ENCODE measurements at regions of chr2 and their contacts with region 1.

Region 1: GRCh38 chr2:174985630-174986029 is 19.6 kb downstream of the CHN1 start:
- DNase-seq: no peak
- H3K4me3 ChIP-seq: no peak overlapping the region
- H3K27me3 ChIP-seq: no peaks in the 10 kb centered on the region
- CTCF ChIP-seq: peak; percentile 57

Region 2: DNA sequence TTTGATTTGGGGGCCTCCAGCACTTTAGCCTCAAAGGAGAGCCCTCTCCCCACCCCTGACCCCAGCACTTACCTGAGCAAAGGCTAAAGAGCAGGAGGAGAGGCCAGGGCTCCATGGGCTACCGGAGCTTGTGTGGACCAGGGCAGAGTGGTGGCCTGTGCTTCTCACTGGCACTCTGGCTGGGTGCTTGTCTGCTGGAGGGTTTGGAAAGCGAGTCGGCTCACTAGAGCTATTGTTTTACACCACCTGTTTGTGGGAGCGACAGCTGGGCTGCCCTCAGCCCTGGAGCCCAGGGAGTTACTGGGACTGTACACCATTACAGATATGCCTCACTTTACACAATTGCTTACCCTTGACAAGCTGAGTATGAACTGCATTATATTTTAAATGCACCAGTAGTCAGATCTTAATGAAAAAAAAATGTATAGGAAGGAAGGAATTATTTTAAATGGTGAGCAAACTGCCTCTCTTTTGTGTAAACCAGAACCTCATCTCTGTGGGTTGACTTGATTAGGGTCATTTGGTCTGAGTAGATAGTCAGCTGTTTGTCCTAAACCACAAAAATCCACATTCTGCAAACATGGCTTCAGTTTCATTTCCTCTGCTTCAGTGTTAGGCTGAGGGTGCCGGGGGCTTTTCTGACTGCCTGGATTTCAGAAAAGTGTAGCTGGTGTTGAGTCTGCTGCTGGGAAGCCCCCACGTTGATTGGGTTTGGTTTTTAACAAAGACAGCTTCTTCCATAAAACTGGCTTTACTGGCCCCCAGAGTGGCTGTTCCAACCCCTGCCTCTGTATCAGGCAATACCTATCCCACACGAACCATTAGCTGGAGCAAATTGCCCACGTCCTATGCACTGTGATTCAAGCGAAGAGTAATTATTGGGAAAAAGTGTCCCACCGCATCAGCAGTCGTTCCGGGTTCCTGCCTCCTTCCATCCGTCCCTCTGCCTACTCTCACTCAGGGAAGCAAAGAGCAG is 221.1 kb before region 1 on chr2 and contains the start of gene CHRNA1:
- CTCF ChIA-PET with region 1: interaction called, 142 read pairs
- POLR2A ChIA-PET with region 1: no interaction called
- DNase-seq: no peak
- H3K4me3 ChIP-seq: no peak within 1 kb of the TSS
- H3K27me3 ChIP-seq: no peaks in the 10 kb centered on the region
- CTCF ChIP-seq: no peak
- polyA plus RNA-seq, gene CHRNA1: 0.20 TPM in 1 of 2 replicates, not detected in the other

Region 3: GRCh38 chr2:174778085-174778981 is 207.3 kb before region 1 on chr2:
- CTCF ChIA-PET with region 1: interaction called, 142 read pairs
- POLR2A ChIA-PET with region 1: interaction called, 4 read pairs
- DNase-seq: peak; percentile 99
- H3K4me3 ChIP-seq: no peak overlapping the region
- H3K27me3 ChIP-seq: no peaks in the 10 kb centered on the region
- CTCF ChIP-seq: no peak

Region 4: DNA sequence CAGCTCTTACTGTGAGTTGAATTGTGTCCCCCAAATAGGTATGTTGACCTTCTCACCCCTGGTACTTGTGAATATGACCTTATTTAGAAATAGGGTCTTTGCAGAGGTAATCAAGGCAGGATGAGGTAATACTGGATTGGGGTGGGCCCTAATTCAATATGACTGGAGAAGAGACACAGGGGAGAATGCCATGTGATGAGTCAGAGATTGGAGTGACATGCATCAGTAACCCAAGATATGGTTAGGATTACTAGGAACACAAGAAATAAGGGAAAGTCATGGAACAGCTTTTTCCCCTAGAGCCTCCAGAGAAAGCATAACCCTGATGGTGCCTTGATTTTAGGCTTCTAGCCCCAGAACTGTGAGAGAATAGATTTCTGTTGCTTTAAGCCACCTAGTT is 232.9 kb after region 1 on chr2:
- CTCF ChIA-PET with region 1: no interaction called
- POLR2A ChIA-PET with region 1: no interaction called
- DNase-seq: no peak
- H3K4me3 ChIP-seq: no peak overlapping the region
- H3K27me3 ChIP-seq: no peaks in the 10 kb centered on the region; the same call in 1 of the 2 replicates
- CTCF ChIP-seq: no peak